ENCODE measurements at regions of chr7 and their contacts with region 1.

Region 1: GRCh38 chr7:147833557-147833956 is 757.0 kb upstream of the C7orf33 start:
- DNase-seq: peak; percentile 14
- H3K4me3 ChIP-seq: peak overlapping the region in 1 of 2 donors; percentile 4
- H3K27ac ChIP-seq: no peak overlapping the region
- H3K4me1 ChIP-seq: no peaks in the 10 kb centered on the region
- H3K27me3 ChIP-seq: no peaks in the 10 kb centered on the region
- CTCF ChIP-seq: no peak
- POLR2A ChIP-seq: no peak

Region 2: DNA sequence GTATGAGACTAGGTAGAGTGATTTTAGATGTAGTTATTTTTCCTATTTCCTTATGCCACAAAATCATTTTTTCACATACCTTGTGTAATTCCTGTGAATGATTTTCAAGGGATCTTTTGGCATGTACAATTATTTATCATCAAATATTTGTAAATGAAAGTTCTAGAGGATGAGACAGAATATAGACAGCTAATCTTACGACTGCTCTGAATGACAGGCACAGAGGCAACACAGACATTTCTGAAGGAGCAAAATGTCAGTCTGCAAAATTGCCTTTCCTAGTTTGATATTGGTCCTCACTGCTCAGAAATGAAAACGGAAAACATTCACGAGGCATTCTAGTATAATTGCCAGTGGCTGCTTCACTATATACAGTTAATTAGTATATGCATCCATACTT is 53.6 kb before region 1 on chr7:
- intact Hi-C with region 1: loop called (anchors 5 kb)
- DNase-seq: no peak
- H3K4me3 ChIP-seq: no peak overlapping the region
- H3K27ac ChIP-seq: no peak overlapping the region
- H3K4me1 ChIP-seq: no peaks in the 10 kb centered on the region
- H3K27me3 ChIP-seq: no peaks in the 10 kb centered on the region
- CTCF ChIP-seq: no peak
- POLR2A ChIP-seq: no peak